ENCODE measurements at regions of chr1 and their contacts with region 1.

Region 1: DNA sequence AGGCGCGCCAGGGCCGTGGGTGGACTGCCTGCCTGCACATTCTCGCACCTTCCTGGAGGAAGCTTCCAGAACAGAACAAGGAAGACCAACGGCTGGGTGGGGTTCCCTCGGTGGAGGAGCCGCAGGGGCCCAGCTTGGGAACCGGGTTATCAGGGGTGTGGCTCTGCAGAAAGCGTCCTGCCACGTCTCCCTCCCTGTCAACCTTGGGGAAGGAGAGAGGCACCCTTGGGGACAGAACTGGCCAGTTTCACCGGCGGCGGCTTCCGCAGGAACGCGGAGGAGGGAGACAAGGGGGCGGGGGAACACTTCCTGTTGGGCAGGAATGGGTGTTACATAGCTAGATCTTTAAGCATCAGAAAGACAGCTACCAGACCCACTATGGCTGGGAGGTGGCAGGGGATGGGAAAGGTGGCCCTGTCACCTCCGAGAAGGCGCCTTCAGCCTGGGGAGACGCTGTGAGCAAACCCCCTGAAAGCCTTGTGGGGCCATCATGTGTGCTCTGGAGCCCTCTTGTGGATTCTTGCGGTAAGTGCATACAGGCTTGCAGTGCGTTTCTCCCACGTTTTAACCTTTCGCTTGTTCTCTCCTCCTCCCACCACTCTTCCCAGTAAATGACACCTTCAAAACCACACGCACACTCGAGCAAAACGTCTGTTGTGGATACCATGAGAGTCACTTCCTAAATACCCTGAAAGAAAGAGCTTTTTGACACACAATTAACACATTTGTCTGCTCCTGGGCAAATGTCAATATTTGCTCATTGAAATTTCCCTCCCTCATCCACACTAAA is 3.8 kb upstream of the PLEKHA6 start:
- DNase-seq: peak; percentile 78
- H3K4me3 ChIP-seq: peak overlapping the region; percentile 41
- H3K27ac ChIP-seq: no peak overlapping the region
- H3K4me1 ChIP-seq: peaks cover 5% of the 10 kb centered on the region
- CTCF ChIP-seq: peak; percentile 92

Region 2: DNA sequence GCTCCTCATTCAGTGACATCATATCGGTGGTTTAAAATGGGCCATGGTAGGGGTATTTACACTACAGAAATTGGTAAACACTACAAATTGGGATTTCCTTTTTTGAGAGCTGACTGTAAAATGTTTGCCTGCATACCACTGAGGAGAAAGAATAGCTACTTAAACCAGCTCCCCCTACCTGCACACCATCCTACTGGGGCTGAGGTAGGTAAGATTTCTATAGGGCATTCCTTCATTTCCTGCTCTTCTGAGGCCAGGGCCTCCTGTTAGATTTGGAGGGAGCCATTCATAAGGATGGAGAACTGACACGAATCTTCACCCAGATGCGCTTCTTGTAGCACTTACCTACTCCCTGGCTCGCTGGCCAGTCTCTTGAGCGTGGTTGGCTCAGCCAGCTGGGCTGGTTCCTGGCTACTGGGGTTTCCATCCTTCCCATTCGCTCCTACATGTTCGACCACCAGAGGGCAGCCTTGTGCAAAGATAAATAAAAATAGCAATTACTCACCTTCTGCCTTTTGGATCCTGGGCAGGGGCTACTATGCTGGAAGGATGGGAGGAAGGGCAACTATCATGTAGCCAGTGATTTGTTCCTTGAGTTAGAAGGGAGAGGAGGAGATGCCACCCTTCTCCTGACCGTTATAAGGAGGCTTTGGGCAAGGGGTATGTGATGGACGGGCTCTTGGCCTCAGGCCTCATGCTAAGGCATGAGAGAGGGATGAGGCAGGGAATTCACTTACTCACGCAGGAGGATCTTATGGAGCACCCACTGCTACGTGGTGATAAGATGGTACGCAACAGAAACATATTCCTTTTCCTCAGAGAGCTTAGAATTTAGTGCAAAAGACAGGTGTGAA is 858.9 kb before region 1 on chr1:
- CTCF ChIA-PET with region 1: no interaction called
- POLR2A ChIA-PET with region 1: no interaction called
- intact Hi-C with region 1: loop called (anchors 5 kb)
- DNase-seq: peak; percentile 81
- H3K4me3 ChIP-seq: no peak overlapping the region
- H3K27ac ChIP-seq: no peak overlapping the region
- H3K4me1 ChIP-seq: no peaks in the 10 kb centered on the region
- CTCF ChIP-seq: peak; percentile 96

Region 3: DNA sequence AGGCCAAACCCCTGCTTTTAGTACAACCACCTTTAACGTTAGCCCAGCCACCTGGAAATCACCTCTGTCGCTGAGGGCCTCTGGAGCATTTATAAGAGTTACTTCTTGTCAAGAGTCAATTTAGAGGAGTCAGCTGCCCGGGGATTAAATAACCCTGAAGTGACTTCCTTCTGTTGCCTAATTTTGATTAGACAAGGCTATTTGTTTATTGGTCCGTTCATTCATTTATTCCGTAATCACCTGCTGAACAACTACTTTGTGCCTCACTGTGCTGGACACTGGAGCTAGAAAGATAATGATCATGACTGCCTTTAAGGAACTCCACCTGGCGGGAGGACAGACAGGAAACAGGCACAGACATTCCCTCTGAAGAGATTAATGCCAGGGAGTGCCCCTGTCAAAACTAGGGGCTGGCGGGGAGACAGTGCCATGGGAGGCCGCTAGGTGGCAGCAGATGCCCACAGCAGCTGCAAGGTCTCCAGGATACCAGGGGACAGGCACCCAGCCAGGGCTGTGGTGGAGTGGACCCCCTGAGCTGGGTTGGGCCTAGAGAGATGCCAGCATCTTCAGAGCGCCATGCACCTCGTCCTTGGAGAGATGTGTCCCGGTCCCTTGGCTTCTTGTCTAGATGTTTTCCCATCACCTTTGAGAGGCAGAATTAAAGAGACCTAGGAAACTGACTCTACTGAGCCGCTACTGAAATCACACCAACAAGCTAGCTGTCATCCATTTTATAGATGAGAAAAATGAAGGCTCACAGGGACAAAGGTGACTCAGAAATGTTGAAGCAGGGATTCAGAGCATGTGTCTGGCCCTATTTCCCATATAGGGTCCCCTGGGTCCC is 201.1 kb before region 1 on chr1:
- CTCF ChIA-PET with region 1: interaction called, 3 read pairs
- POLR2A ChIA-PET with region 1: interaction called, 3 read pairs
- intact Hi-C with region 1: loop called (anchors 1 kb)
- DNase-seq: peak; percentile 64
- H3K4me3 ChIP-seq: no peak overlapping the region
- H3K27ac ChIP-seq: no peak overlapping the region
- H3K4me1 ChIP-seq: no peaks in the 10 kb centered on the region
- CTCF ChIP-seq: peak; percentile 98

Region 4: GRCh38 chr1:204207136-204207616 is 156.4 kb before region 1 on chr1:
- CTCF ChIA-PET with region 1: no interaction called
- POLR2A ChIA-PET with region 1: no interaction called
- intact Hi-C with region 1: loop called (anchors 5 kb)
- DNase-seq: peak; percentile 57
- H3K4me3 ChIP-seq: no peak overlapping the region
- H3K27ac ChIP-seq: no peak overlapping the region
- H3K4me1 ChIP-seq: no peaks in the 10 kb centered on the region
- CTCF ChIP-seq: peak; percentile 89

Region 5: GRCh38 chr1:204257954-204258752 is 105.4 kb before region 1 on chr1:
- CTCF ChIA-PET with region 1: no interaction called
- POLR2A ChIA-PET with region 1: no interaction called
- intact Hi-C with region 1: loop called (anchors 1 kb)
- DNase-seq: peak; percentile 28
- H3K4me3 ChIP-seq: no peak overlapping the region
- H3K27ac ChIP-seq: no peak overlapping the region
- H3K4me1 ChIP-seq: no peaks in the 10 kb centered on the region
- CTCF ChIP-seq: peak; percentile 80

Region 6: DNA sequence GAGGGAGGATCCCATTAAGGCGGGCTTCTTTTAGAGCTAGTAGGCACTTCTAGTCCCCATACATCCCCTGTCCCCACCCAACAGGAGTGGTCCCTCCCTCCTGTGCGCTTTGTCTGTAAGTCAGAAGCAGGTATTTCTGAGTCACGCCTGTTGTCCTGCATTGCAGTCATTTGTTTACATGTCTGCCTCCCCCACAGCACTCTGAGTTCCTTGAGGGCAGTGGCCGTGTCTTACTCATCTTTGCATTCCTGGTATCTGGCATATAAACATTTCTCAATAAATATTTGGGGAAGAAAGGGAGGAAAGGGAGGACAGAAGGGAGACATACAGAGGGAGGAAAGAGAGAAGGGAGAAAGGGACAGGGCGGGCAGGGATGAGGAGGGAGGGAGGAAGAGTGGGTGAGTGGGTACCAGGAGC is 44.0 kb before region 1 on chr1:
- CTCF ChIA-PET with region 1: no interaction called
- POLR2A ChIA-PET with region 1: no interaction called
- intact Hi-C with region 1: no loop called
- DNase-seq: no peak
- H3K4me3 ChIP-seq: no peak overlapping the region
- H3K27ac ChIP-seq: no peak overlapping the region
- H3K4me1 ChIP-seq: no peaks in the 10 kb centered on the region
- CTCF ChIP-seq: no peak

Region 7: DNA sequence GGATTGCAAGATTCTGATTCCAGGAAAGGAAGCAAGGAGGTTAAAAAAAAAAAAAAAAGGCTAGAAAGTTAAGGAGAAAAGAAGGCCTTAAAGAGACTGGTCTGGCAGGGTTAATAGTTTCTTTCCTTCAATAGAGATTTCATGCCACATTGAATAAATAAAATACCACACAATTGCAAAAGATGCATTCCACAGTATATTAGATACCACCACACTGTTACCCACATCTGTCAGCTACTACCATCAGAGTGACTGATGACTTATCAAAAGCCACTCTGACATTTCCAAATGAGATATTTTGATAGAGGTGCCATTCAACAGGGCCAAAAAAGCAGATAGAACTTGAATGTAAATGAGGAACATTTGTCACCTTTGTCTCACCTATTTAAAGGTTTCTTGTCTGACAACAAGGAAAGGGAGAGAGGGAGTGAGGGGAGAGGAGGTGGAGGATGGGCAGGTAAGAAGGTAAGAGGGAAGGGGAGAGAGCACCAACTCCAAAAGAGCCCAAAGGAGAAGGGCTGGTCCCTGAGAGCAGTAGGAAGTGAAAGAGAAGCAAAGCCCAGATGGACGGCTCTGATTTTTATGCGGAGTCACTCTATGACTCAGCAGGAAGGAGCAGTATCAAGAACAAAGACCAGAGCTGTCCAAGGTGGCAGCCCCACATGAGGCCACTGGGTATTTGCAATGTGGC is 283.7 kb after region 1 on chr1:
- CTCF ChIA-PET with region 1: no interaction called
- POLR2A ChIA-PET with region 1: no interaction called
- intact Hi-C with region 1: no loop called
- DNase-seq: peak; percentile 16
- H3K4me3 ChIP-seq: no peak overlapping the region
- H3K27ac ChIP-seq: no peak overlapping the region
- H3K4me1 ChIP-seq: no peaks in the 10 kb centered on the region
- CTCF ChIP-seq: no peak